PC-3 (cell line): ENCODE measurements at regions of chr14 and their contacts with region 1.

Region 1: GRCh38 chr14:36214476-36215216 is 38.1 kb upstream of the PTCSC3 start:
- DNase-seq: peak; percentile 47
- ATAC-seq: peak; percentile 49
- H3K4me3 ChIP-seq: peak overlapping the region; percentile 37; the same call in 1 of the 2 replicates
- H3K27ac ChIP-seq: peak overlapping the region; percentile 33; the same call in 1 of the 2 replicates
- H3K4me1 ChIP-seq: peaks cover 43% of the 10 kb centered on the region
- H3K27me3 ChIP-seq: peaks cover 26% of the 10 kb centered on the region; the same call in 1 of the 2 replicates
- CTCF ChIP-seq: no peak

Region 2: DNA sequence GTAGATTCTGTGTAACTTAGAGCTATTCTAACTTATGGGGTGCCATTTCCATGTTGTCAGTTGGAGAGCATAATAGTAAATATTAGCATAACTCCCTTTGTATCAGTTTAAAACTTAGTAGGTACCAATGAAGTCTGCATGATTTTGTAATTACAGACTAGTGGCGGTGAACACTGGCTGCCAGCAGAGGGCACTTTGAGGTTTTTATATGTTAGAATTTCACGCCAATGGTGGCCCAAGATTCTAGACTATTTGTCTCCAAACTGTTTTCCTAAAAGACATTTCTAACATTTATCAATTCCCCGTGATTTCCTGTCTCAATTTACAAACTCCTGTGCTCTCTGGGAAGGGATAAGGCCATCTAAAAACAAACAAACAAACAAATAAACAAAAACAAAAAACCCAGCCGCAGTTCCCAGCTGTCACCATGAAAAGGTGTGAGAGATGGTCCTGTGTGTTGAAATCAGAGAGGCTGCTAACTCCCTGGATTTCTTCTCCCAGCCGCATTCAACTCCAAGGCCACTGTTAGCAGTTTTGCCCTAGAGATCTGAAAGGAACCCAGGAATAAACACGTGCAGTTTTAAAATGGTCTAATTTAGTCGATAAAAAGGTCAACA is 330.9 kb before region 1 on chr14:
- CTCF ChIA-PET with region 1: no interaction called
- POLR2A ChIA-PET with region 1: no interaction called
- intact Hi-C with region 1: loop called (anchors 2 kb)
- DNase-seq: peak; percentile 60
- ATAC-seq: peak; percentile 75
- H3K4me3 ChIP-seq: peak overlapping the region; percentile 41; the same call in 1 of the 2 replicates
- H3K27ac ChIP-seq: no peak overlapping the region
- H3K4me1 ChIP-seq: peaks cover 12% of the 10 kb centered on the region
- H3K27me3 ChIP-seq: no peaks in the 10 kb centered on the region
- CTCF ChIP-seq: peak; percentile 92

Region 3: GRCh38 chr14:36227802-36228201 is 13.2 kb after region 1 on chr14:
- CTCF ChIA-PET with region 1: no interaction called
- POLR2A ChIA-PET with region 1: interaction called, 3 read pairs
- intact Hi-C with region 1: loop called (anchors 1 kb)
- DNase-seq: peak; percentile 86
- ATAC-seq: peak; percentile 98
- H3K4me3 ChIP-seq: no peak overlapping the region
- H3K27ac ChIP-seq: peak overlapping the region; percentile 51
- H3K4me1 ChIP-seq: peaks cover 23% of the 10 kb centered on the region
- H3K27me3 ChIP-seq: no peaks in the 10 kb centered on the region
- CTCF ChIP-seq: no peak

Region 4: GRCh38 chr14:36238666-36239363 is 24.2 kb after region 1 on chr14:
- CTCF ChIA-PET with region 1: no interaction called
- POLR2A ChIA-PET with region 1: no interaction called
- intact Hi-C with region 1: loop called (anchors 1 kb)
- DNase-seq: peak; percentile 73
- ATAC-seq: peak; percentile 95
- H3K4me3 ChIP-seq: no peak overlapping the region
- H3K27ac ChIP-seq: no peak overlapping the region
- H3K4me1 ChIP-seq: peaks cover 18% of the 10 kb centered on the region
- H3K27me3 ChIP-seq: peaks cover 16% of the 10 kb centered on the region; the same call in 1 of the 2 replicates
- CTCF ChIP-seq: no peak

Region 5: GRCh38 chr14:36320200-36320896 is 105.7 kb after region 1 on chr14 and contains the start of gene MBIP:
- CTCF ChIA-PET with region 1: no interaction called
- POLR2A ChIA-PET with region 1: interaction called, 5 read pairs
- intact Hi-C with region 1: loop called (anchors 1 kb)
- DNase-seq: peak; percentile 97
- ATAC-seq: peak; percentile 88
- H3K4me3 ChIP-seq: peak within 1 kb of the TSS; percentile 95
- H3K27ac ChIP-seq: peak within 1 kb of the TSS; percentile 39
- H3K4me1 ChIP-seq: peaks cover 31% of the 10 kb centered on the region
- H3K27me3 ChIP-seq: peaks cover 37% of the 10 kb centered on the region; the same call in 1 of the 2 replicates
- CTCF ChIP-seq: no peak
- total RNA-seq, gene MBIP: 7.8 and 8.5 TPM in 2 replicates